Naive thymus-derived CD4-positive, alpha-beta T cell (primary cell): ENCODE measurements at regions of chr17 and their contacts with region 1.

Region 1: DNA sequence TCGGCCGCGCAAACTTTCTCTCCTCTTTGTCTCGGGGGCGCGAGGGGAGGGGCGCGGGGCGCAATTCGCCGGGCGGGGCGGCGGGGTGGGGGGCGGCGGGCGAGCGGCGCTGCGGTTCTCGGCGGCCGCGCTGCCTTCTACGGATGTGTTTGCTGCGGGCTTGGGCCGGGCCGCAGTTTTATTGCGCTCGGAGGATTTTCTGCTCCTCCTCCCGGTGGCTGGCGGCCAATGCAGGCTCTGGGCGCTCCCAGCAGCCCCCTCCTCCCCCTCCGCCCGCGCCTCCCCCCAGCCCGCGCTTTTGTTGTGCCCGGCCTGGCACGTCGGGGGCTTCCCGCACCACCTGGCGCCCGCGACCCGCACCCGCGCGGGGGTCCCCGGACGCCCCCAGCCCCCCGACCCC is at the start of gene TIMP2:
- DNase-seq: peak; percentile 54 to 78 (median 74)
- ATAC-seq: peak; percentile 89
- H3K4me3 ChIP-seq: peak within 1 kb of the TSS; percentile 49
- H3K4me3 Mint-ChIP-seq: peak within 1 kb of the TSS; percentile 62 to 88 (median 80)
- H3K27ac ChIP-seq: peak within 1 kb of the TSS; percentile 32
- H3K27ac Mint-ChIP-seq: peak within 1 kb of the TSS in 1 of 9 donors; percentile 3
- H3K4me1 ChIP-seq: peaks cover 0 to 7% of the 10 kb centered on the region in 2 donors
- H3K4me1 Mint-ChIP-seq: peaks cover 7 to 19% (median 12%) of the 10 kb centered on the region in 7 donors
- H3K27me3 ChIP-seq: no peaks in the 10 kb centered on the region
- H3K27me3 Mint-ChIP-seq: peaks cover 0 to 48% (median 0%) of the 10 kb centered on the region in 5 donors
- total RNA-seq, gene TIMP2: 1.2 to 46.1 (median 5.8) TPM

Region 2: DNA sequence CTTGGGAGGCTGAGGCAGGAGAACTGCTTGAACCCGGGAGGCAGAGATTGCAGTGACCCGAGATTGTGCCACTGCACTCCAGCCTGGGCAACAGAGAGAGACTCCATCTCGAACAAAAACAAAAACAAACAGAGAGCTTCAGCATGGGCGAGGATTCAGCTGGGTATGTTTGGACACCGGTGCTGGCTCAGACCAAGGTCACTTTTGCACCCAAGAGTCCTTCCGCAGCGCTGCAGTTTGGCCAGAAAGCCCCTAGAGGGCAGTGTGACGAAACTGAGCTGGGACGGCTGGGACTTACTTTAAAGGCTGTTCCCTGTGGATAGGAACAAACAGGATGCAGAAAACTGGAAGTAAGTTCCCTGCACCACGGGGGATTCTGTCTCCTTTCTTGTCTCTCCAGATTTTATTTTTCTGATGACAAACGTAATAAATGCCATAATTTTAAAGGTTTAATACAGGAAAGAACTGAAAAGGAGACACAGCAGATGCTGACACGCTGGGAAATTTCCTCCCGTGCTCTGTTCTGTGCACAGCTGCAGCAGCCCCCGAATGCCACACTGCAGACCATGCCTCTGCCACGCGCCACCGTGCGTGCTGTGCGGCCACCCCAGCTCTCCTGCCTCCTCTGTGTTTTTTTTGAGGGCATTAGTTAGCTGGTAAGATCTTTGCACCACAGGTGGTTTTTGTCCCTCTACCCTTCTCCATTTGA is 59.4 kb before region 1 on chr17:
- CTCF ChIA-PET with region 1: interaction called, 6 read pairs
- POLR2A ChIA-PET with region 1: no interaction called
- intact Hi-C with region 1: loop called (anchors 1 to 5 kb)
- DNase-seq: peak in 8 of 9 donors; percentile 31 to 73 (median 50)
- ATAC-seq: peak; percentile 63
- H3K4me3 ChIP-seq: no peak overlapping the region
- H3K4me3 Mint-ChIP-seq: no peak overlapping the region
- H3K27ac ChIP-seq: no peak overlapping the region
- H3K27ac Mint-ChIP-seq: no peak overlapping the region
- H3K4me1 ChIP-seq: no peaks in the 10 kb centered on the region
- H3K4me1 Mint-ChIP-seq: peaks cover 0 to 6% (median 4%) of the 10 kb centered on the region in 7 donors
- H3K27me3 ChIP-seq: no peaks in the 10 kb centered on the region
- H3K27me3 Mint-ChIP-seq: peaks cover 0 to 4% (median 0%) of the 10 kb centered on the region in 5 donors

Region 3: DNA sequence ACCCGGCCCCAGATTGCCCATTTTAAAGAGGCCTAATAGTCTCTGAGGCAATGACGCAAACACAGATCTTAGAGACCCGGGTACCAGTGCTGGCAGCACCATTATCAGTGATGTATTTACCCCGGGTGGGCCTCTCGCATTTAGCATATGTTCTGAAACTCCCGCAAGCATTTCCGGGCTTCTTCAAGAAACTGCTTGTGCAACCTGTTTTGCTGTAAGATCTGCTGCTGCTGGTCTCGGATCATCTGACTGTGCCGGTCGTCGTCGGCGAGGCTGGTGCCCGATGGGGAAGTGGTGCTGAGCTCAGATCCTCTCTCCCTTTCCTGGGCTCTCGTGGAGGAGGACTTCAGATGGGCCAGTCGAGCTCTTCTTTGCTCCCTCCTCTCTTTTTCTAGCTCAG is 34.7 kb before region 1 on chr17:
- CTCF ChIA-PET with region 1: no interaction called
- POLR2A ChIA-PET with region 1: no interaction called
- intact Hi-C with region 1: loop called in 1 of 2 experiments (anchors 2 kb)
- DNase-seq: peak; percentile 30 to 71 (median 64)
- ATAC-seq: peak; percentile 82
- H3K4me3 ChIP-seq: no peak overlapping the region
- H3K4me3 Mint-ChIP-seq: peak overlapping the region in 9 of 10 donors; percentile 15 to 69 (median 49)
- H3K27ac ChIP-seq: peak overlapping the region; percentile 53
- H3K27ac Mint-ChIP-seq: peak overlapping the region; percentile 49 to 96 (median 87)
- H3K4me1 ChIP-seq: peaks cover 0 to 17% of the 10 kb centered on the region in 2 donors
- H3K4me1 Mint-ChIP-seq: peaks cover 19 to 43% (median 35%) of the 10 kb centered on the region in 7 donors
- H3K27me3 ChIP-seq: no peaks in the 10 kb centered on the region
- H3K27me3 Mint-ChIP-seq: peaks cover 0 to 11% (median 0%) of the 10 kb centered on the region in 5 donors